ENCODE measurements at regions of chr20 and their contacts with region 1.

Region 1: GRCh38 chr20:10673988-10674711 is at the start of gene JAG1:
- DNase-seq: peak; percentile 95 to 96
- ATAC-seq: peak; percentile 85 to 93 (median 88)
- H3K4me3 ChIP-seq: peak within 1 kb of the TSS; percentile 69 to 98 (median 87)
- H3K27ac ChIP-seq: peak within 1 kb of the TSS; percentile 89 to 100 (median 98)
- H3K4me1 ChIP-seq: peaks cover 1 to 33% (median 18%) of the 10 kb centered on the region in 9 donors
- H3K27me3 ChIP-seq: no peaks in the 10 kb centered on the region
- CTCF ChIP-seq: no peak
- total RNA-seq, gene JAG1: 23.0 to 38.2 (median 27.5) TPM

Region 2: DNA sequence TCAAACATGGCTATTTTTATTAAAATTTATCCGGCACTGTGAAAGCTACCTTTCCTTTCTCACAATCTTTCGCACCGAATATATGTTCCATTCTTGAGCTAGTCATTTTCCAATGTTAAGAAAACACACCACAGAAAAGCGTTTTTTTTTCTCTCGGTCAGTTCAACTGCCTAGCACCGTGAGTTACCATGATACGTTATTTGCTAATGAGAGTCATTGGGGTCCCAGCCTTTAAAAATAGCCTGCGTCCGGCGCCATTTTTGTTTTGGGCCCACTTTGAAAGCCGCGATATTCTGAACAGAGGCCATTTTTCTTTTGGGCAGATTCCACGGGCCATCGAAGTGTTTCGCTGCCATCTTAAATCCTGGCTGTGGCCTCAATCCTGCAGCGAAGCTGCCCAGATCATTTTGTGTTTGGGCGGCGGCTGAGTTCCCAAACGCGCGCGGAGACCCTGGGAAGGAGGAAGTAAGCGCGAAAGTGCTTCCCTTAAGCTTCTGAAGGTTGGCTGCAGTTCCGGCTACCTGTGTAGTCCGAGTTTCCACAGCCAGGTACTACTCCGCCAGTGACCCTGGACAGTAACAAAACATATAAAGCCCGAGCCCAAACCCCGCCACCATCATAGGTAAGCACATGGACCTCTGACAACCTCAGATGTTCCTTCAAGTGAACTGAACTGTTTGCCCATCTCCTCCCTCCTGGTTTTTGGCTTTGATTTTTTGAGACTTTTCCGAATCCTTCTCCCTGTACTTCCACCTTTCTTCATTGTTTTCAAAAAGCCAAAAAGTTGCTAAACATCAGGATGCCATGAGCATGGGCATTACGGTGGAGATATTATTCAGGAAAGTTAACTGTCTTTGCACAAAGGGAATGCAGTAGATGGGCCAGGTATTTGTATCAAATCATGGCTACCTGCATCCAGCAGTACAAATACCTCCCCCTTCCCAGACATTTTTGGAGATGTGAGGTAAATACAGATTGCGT is 239.0 kb before region 1 on chr20 and contains the start of gene SLX4IP:
- intact Hi-C with region 1: loop called in 1 of 10 experiments (anchors 5 kb)
- DNase-seq: peak; percentile 85 to 97
- ATAC-seq: peak; percentile 81 to 92 (median 88)
- H3K4me3 ChIP-seq: peak within 1 kb of the TSS; percentile 51 to 94 (median 86)
- H3K27ac ChIP-seq: peak within 1 kb of the TSS; percentile 54 to 97 (median 94)
- H3K4me1 ChIP-seq: peaks cover 6 to 41% (median 37%) of the 10 kb centered on the region in 9 donors
- H3K27me3 ChIP-seq: no peaks in the 10 kb centered on the region
- CTCF ChIP-seq: no peak
- total RNA-seq, gene SLX4IP: 1.6 to 3.1 (median 2.6) TPM

Region 3: DNA sequence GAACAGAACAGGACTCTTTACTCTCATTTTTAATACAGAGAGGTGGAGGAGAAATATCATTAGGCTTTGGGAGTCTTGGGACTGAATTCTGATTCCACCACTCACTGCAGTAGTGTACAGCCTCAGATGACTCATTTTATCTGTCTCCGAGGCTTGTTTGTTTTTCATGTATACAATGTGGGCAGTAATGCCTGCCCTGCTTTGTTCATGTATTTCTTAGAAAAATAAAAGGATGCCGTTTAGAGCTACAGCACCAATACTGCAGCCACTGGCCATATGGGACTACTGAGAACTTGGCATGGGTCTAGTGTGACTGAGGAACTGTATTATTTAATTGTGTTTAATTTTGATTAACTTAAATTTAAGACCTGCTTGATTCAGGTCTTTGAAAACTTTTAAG is 40.9 kb after region 1 on chr20:
- intact Hi-C with region 1: loop called in 2 of 10 experiments (anchors 5 kb)
- DNase-seq: no peak
- ATAC-seq: no peak
- H3K4me3 ChIP-seq: no peak overlapping the region
- H3K27ac ChIP-seq: no peak overlapping the region
- H3K4me1 ChIP-seq: peaks cover 0 to 24% (median 13%) of the 10 kb centered on the region in 9 donors
- H3K27me3 ChIP-seq: no peaks in the 10 kb centered on the region
- CTCF ChIP-seq: no peak

Region 4: GRCh38 chr20:10747019-10747418 is 72.9 kb after region 1 on chr20:
- intact Hi-C with region 1: loop called in 3 of 10 experiments (anchors 2 to 5 kb)
- DNase-seq: peak in 1 of 2 donors; percentile 13
- ATAC-seq: peak; percentile 53 to 89 (median 77)
- H3K4me3 ChIP-seq: peak overlapping the region in 2 of 10 donors; percentile 1 to 6
- H3K27ac ChIP-seq: peak overlapping the region in 9 of 10 donors; percentile 32 to 82 (median 63)
- H3K4me1 ChIP-seq: peaks cover 0 to 47% (median 7%) of the 10 kb centered on the region in 9 donors
- H3K27me3 ChIP-seq: no peaks in the 10 kb centered on the region
- CTCF ChIP-seq: no peak

Region 5: GRCh38 chr20:10857352-10858070 is 183.4 kb after region 1 on chr20:
- intact Hi-C with region 1: loop called in 3 of 10 experiments (anchors 5 to 10 kb)
- DNase-seq: peak in 1 of 2 donors; percentile 59
- ATAC-seq: peak; percentile 56 to 89 (median 76)
- H3K4me3 ChIP-seq: no peak overlapping the region
- H3K27ac ChIP-seq: peak overlapping the region in 7 of 10 donors; percentile 36 to 72 (median 52)
- H3K4me1 ChIP-seq: peaks cover 0 to 51% (median 27%) of the 10 kb centered on the region in 9 donors
- H3K27me3 ChIP-seq: no peaks in the 10 kb centered on the region
- CTCF ChIP-seq: no peak

Region 6: DNA sequence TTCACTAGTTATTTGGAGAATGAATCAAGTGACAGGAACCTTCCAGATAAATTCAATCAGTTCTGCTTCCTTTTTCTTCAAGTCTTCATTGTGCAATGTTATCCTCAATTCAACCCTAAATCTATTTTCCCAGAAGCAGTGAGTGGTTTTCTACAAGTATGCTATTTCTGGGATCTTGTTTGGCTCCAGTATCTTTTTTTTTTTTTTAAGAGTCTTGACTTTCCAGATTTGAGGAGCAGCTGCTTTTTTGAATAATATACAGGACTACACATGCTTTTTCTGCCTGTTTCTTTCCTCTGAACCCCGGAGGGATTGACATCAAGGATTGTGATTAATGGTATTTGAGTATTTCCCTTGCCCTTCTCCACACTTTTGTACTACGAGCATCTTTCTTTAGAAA is 338.8 kb after region 1 on chr20:
- intact Hi-C with region 1: loop called in 1 of 10 experiments (anchors 10 kb)
- DNase-seq: no peak
- ATAC-seq: peak in 7 of 8 donors; percentile 71 to 89 (median 83)
- H3K4me3 ChIP-seq: no peak overlapping the region
- H3K27ac ChIP-seq: peak overlapping the region in 8 of 10 donors; percentile 7 to 73 (median 54)
- H3K4me1 ChIP-seq: peaks cover 0 to 30% (median 3%) of the 10 kb centered on the region in 9 donors
- H3K27me3 ChIP-seq: no peaks in the 10 kb centered on the region
- CTCF ChIP-seq: no peak

Region 7: DNA sequence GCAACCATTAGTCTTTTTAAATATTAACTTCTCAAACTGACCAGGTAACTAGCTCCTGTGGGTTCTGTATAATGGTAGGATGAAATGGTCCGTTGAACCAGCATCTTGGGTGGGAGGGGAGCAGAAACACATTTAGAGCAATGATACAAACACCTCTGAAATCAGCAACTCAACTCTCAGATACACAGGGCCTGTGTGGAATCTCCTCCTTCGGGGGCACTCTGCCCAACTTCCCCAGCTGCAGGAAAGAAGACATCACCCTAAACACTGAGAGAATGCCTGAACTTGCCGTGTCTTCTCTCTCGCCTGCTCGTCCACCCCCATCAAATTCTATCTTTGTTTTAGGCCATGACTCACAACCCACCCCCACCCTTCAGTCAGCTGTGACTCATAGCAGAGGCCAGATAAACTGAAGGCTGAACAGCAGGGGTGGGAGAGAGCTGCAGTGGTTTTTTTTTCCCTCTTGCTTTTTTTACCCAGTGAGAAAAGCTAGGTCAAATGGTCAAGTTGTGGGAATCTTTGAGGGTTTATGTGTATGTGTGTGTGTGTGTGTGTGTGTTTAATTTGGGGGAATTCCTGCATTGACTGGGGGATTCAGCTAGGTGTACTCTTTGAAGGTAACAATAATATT is 593.1 kb after region 1 on chr20:
- intact Hi-C with region 1: loop called in 6 of 10 experiments (anchors 5 to 10 kb)
- DNase-seq: peak; percentile 15 to 69
- ATAC-seq: peak; percentile 79 to 96 (median 93)
- H3K4me3 ChIP-seq: no peak overlapping the region
- H3K27ac ChIP-seq: peak overlapping the region in 8 of 10 donors; percentile 9 to 65 (median 47)
- H3K4me1 ChIP-seq: peaks cover 6 to 24% (median 17%) of the 10 kb centered on the region in 9 donors
- H3K27me3 ChIP-seq: no peaks in the 10 kb centered on the region
- CTCF ChIP-seq: peak in 3 of 9 donors; percentile 8 to 14 (median 12)